Activated T-helper 1 cell treated with anti-CD3 and anti-CD28 coated beads, Interleukin-12 subunit alpha, Interleukin-12 subunit beta, Interleukin-2, Interleukin-4 antibody, amounts not matched to agents 30 ng/mL and 10 ng/mL and 1 ng/mL, durations not matched to agents 14 hours and 24 hours and 36 hours (primary cell): ENCODE measurements at regions of chr1 and their contacts with region 1.

Region 1: DNA sequence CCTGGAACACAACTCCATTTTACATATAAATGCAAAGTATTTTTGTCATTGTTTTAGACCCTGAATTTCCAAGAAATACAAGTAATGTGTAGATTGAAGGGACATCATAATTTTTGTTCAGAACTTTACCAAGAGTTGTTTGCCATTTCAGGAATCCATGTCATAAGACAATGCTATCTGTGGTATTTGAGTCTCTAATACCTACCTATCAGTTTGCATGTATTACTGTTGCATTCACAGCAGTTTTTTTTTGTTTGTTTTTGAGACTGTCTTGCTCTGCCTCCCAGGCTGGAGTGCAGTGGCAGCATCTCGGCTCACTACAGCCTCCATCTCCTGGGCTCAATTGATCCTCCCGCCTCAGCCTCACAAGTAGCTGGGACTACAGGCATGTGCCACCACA is 17.1 kb downstream of the MPZ start:
- DNase-seq: no peak
- H3K4me3 Mint-ChIP-seq: no peak overlapping the region
- H3K27ac Mint-ChIP-seq: no peak overlapping the region
- H3K4me1 Mint-ChIP-seq: no peaks in the 10 kb centered on the region
- H3K27me3 Mint-ChIP-seq: no peaks in the 10 kb centered on the region

Region 2: DNA sequence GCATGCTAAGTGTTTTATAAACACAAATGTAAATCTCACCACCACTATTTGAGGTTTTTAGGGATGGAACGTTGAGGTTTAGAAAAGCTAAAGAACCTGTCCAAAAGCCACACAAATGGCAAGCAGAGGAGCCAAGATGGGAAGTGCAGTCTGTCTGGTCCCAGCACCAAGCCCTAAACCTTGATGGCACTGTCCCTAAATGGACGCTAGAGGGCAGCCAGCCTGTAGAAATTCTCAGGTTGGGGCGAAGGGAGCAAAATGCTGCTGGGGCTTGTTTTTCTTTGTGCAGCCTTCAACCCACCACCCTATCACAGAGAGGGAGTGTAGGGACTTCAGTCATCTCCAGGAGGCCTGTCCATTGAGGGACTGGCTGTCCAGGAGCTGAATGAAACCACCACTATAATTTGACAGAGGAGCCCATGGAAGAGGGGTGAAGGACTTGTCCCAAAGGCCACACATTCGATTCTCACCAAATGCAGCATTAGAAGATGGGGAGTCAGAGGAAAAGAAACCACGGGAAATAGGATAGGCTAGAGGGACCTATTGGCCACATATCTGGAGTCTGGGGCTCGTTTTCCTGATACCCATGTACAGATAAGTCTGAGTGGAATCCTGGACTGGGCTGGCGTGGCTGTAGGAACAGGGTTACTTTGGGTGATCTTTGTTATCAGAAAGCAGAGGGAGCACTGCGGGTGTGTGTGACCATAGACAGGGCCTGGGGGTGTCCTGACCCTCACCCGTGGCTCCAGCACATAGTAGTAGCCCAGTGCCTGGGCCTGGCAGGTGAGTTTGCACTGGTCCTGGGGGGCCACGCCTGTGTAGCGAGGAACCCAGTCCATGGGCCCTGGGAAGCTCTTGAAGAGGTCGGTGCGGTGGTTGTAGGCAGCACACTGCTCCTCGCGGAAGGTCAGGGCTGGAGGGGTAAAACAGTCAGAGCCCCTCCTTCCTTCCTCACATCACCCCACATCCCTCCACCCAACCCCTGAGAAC is 99.9 kb before region 1 on chr1:
- intact Hi-C with region 1: loop called (anchors 1 kb)
- DNase-seq: peak; percentile 63
- H3K4me3 Mint-ChIP-seq: no peak overlapping the region
- H3K27ac Mint-ChIP-seq: peak overlapping the region; percentile 67
- H3K4me1 Mint-ChIP-seq: peaks cover 53% of the 10 kb centered on the region
- H3K27me3 Mint-ChIP-seq: no peaks in the 10 kb centered on the region

Region 3: DNA sequence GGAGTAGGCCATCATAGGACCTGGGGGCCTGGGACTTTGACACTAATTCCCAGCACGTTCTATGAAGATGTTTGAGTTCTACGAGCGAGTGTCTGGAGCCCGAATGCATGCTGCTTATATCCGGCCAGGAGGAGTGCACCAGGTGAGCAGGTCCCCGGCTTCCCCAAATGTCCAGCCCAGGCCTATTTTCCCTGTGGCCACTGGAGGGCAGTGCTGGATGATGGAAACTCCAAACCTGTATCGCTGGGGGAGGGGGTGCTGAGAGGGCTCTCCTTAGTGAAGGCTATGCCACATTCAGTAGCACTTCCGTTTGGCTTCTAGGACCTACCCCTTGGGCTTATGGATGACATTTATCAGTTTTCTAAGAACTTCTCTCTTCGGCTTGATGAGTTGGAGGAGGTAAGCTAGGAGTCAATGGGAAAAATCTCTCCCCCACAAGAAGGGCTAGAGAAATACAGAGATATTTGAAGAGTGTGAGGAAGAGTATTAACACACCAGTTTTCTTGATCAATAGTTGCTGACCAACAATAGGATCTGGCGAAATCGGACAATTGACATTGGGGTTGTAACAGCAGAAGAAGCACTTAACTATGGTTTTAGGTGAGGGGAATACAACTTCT is 82.7 kb before region 1 on chr1:
- intact Hi-C with region 1: loop called (anchors 1 kb)
- DNase-seq: peak; percentile 62
- H3K4me3 Mint-ChIP-seq: no peak overlapping the region
- H3K27ac Mint-ChIP-seq: peak overlapping the region; percentile 60
- H3K4me1 Mint-ChIP-seq: peaks cover 41% of the 10 kb centered on the region
- H3K27me3 Mint-ChIP-seq: no peaks in the 10 kb centered on the region

Region 4: DNA sequence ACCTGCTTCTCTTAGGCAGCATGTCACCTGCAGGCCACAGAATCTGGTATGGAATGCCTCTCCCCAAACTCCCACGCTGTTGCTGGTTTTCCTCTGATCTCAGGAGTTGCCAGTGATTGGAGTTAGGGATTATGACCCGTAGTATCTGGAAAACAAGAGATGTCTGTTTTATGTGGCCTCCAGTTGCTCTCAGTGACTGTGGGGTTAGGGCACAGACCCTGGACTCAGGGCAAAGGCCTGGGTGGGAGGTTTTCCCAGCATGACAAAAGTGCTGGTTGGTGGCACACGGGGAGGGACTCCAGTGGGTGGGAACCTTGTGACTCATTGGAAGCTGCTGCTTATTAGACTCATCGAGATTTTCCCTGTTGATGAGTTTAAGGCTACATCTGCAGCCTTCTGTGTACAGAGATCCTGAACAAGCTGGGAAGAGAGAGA is 54.6 kb before region 1 on chr1 and contains the start of gene NR1I3:
- intact Hi-C with region 1: no loop called
- DNase-seq: no peak
- H3K4me3 Mint-ChIP-seq: no peak within 1 kb of the TSS
- H3K27ac Mint-ChIP-seq: no peak within 1 kb of the TSS
- H3K4me1 Mint-ChIP-seq: no peaks in the 10 kb centered on the region
- H3K27me3 Mint-ChIP-seq: peaks cover 10% of the 10 kb centered on the region
- total RNA-seq, gene NR1I3: not detected in 2 replicates

Region 5: GRCh38 chr1:161314201-161314981 is 21.8 kb after region 1 on chr1 and contains the start of gene SDHC:
- intact Hi-C with region 1: loop called (anchors 1 kb)
- DNase-seq: peak; percentile 88
- H3K4me3 Mint-ChIP-seq: peak within 1 kb of the TSS; percentile 99
- H3K27ac Mint-ChIP-seq: peak within 1 kb of the TSS; percentile 87
- H3K4me1 Mint-ChIP-seq: peaks cover 26% of the 10 kb centered on the region
- H3K27me3 Mint-ChIP-seq: peaks cover 2% of the 10 kb centered on the region
- total RNA-seq, gene SDHC: 157 and 162 TPM in 2 replicates

Region 6: DNA sequence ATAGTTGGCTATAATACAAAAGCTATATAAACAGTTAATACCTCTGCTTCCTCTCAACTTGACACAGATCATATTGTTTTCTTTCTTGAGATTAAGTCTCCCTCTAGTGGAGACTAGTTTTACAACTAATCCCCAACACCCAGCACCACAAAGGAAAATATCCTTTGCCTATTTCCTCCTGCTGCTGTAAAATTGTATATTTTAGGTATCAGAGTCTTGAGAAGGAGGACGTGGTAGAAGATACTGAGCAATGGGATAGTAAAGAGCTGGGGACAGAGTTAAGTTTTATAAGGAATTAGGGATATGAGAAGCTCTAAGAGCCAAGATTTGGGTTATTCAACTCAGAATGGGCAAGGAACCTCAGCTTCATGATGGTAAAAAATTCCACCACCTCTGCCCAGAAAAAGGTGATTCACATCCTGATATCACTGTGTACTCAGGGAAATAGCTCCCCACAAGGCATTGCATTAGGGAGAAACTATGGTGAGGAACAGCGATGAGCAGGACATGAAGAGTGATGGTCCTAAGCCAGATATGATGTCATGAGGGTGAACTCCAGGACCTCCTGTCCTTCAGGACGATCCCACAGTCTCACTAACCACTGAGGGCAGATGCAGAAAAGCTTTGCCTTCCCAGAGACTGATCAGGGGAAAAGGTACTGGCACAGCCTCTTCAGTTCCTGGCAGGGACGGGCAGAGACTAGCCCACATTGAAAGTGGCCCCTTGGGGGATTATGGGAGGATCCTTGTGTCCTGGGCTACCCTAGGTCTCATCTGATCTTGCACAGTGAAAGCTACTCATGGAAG is 89.8 kb after region 1 on chr1:
- intact Hi-C with region 1: loop called (anchors 5 kb)
- DNase-seq: no peak
- H3K4me3 Mint-ChIP-seq: no peak overlapping the region
- H3K27ac Mint-ChIP-seq: no peak overlapping the region
- H3K4me1 Mint-ChIP-seq: peaks cover 18% of the 10 kb centered on the region
- H3K27me3 Mint-ChIP-seq: peaks cover 2% of the 10 kb centered on the region